WTC11 (cell line): ENCODE measurements at regions of chr17 and their contacts with region 1.

Region 1: DNA sequence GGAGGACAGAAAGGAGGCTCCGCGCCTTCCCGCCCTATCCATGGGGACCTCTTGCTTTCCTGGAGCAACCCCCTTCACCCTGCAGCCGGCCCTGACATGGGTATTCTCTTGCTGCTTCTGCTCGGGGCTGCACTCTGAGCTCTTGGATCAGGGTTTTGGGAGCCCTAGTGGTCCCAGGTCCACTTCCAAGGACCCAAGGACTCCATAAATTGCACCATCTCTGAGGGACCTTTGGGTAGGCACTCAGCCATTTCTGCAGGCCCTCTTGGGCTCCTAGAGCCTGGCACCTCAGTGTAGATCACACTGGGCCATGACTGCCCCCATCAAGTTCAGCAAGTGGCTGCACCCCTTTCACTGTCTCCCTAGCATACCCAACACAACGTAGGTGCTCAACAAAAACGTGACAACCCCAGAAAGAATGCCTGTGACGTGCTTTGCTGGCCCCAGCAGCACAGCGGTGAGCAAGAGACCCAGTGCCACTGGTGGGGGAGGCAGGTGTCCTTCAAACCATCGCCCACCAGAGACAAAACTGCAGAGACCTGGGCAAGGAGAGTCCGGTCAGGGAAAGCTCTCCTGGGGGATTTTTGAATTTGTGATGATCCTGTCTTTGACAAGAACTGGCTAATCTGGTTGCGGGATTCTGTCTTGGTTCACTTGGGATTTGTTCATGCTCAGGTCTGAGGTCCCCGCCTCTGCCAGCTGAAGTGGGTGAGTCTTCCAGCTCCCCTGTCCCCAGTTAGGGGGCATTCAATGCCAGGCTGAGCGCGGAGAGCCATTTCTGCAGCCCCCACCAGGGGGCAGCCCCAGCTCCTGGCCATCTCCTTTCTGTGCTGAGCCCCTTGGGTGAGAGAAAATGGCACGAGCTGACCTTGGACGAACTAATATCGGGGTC is 2.5 kb upstream of the RAB11FIP4 start:
- DNase-seq: peak; percentile 68
- ATAC-seq: peak; percentile 51
- H3K4me3 Mint-ChIP-seq: peak overlapping the region; percentile 76; the same call in 1 of the 2 replicates
- H3K27ac Mint-ChIP-seq: no peak overlapping the region
- H3K4me1 Mint-ChIP-seq: peaks cover 14% of the 10 kb centered on the region
- H3K27me3 Mint-ChIP-seq: peaks cover 40% of the 10 kb centered on the region
- CTCF ChIP-seq: peak; percentile 67

Region 2: DNA sequence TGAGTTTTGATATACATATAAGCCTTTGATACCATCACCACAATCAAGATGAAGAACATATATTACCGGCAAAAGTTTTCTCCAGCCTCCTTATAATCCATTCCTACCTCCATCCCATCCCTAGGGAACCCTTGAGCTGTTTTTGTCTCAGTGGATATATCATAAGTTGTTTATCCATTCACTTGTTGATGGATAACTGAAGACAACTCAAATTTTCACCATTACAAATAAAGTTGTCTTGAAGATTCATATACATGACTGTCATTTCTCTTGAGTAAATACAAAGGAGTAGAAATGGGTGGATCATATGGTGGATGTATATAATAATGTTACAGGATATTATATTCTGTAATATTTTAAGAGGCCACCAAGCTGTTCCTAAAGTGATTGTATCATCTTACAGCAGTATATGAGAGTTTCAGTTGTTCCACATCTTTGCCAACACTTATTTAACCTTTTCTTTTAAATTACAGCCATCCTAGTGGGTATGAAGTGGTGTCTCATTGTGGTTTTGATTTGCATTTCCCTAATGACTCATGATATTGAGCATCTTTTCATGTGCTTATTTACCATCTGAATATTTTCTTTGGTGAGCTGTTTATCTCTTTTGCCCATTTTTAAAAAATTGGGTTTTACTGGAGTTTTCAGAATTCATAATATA is 276.9 kb before region 1 on chr17:
- CTCF ChIA-PET with region 1: no interaction called
- POLR2A ChIA-PET with region 1: no interaction called
- DNase-seq: no peak
- ATAC-seq: no peak
- H3K4me3 Mint-ChIP-seq: no peak overlapping the region
- H3K27ac Mint-ChIP-seq: no peak overlapping the region
- H3K4me1 Mint-ChIP-seq: peaks cover 33% of the 10 kb centered on the region
- H3K27me3 Mint-ChIP-seq: no peaks in the 10 kb centered on the region
- CTCF ChIP-seq: no peak

Region 3: DNA sequence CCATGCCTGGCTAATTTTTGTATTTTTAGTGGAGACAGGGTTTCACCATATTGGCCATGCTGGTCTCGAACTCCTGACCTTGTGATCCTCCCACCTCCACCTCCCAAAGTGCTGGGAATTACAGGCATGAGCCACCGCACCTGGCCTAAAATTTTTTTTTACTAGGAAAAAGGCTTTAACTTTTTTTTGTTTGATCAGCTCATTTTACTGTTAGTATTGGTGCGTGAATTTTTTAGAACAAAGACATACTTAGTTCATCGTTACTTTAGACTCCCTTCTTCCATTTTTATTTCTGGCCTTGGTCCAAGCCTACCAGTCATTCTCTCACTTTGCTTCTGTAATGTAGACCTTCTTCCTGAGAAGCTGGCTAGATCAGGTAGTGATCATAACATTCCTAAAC is 22.9 kb before region 1 on chr17:
- CTCF ChIA-PET with region 1: interaction called, 13 read pairs
- POLR2A ChIA-PET with region 1: no interaction called
- DNase-seq: no peak
- ATAC-seq: no peak
- H3K4me3 Mint-ChIP-seq: no peak overlapping the region
- H3K27ac Mint-ChIP-seq: no peak overlapping the region
- H3K4me1 Mint-ChIP-seq: peaks cover 13% of the 10 kb centered on the region
- H3K27me3 Mint-ChIP-seq: no peaks in the 10 kb centered on the region
- CTCF ChIP-seq: no peak

Region 4: DNA sequence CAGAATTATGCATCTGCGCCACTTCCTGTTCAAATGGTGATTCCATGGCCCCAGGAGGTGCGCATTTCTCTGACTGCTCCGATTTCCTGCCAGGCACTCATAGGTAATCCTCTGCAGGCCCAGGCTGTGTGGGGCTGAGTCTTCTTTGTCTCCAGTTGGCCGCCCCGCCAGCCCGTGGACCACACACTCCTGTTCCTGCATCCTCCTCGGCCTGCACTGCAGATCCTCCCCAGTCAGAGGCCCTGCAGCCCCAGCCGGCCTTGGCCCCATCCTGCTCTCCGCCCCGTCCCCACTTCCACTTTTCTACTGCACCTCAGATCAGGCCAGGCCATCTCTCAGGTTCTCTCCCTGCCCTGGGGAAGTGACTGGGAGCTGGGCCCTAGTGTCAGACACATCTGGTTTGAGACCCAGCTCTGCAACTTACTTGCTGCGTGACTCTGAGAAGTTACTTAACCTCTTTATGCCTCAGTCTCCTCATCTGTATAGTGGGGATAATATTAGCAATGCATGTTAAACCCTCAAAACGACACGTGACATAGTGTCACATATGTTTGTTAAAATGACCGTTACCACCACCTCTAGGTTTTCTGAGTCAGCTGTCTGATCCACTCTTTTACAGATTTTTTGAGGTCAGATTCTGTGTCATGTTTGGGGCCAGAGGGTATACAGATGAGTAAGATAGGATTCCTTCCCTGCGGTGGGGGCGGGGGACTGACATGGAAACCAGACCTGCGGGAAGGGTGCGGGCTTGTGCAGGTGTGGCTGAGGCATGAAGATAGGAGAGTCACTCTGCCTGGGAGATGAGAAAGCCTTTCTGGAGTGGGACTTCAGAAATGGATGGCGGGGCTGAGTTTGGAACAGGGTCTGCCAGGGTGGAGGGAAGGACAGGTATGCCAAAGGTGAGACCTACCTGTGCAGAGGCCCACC is 15.3 kb after region 1 on chr17:
- CTCF ChIA-PET with region 1: interaction called, 21 read pairs
- POLR2A ChIA-PET with region 1: no interaction called
- DNase-seq: peak; percentile 13
- ATAC-seq: no peak
- H3K4me3 Mint-ChIP-seq: no peak overlapping the region
- H3K27ac Mint-ChIP-seq: peak overlapping the region; percentile 58; the same call in 1 of the 2 replicates
- H3K4me1 Mint-ChIP-seq: peaks cover 16% of the 10 kb centered on the region
- H3K27me3 Mint-ChIP-seq: no peaks in the 10 kb centered on the region
- CTCF ChIP-seq: no peak

Region 5: DNA sequence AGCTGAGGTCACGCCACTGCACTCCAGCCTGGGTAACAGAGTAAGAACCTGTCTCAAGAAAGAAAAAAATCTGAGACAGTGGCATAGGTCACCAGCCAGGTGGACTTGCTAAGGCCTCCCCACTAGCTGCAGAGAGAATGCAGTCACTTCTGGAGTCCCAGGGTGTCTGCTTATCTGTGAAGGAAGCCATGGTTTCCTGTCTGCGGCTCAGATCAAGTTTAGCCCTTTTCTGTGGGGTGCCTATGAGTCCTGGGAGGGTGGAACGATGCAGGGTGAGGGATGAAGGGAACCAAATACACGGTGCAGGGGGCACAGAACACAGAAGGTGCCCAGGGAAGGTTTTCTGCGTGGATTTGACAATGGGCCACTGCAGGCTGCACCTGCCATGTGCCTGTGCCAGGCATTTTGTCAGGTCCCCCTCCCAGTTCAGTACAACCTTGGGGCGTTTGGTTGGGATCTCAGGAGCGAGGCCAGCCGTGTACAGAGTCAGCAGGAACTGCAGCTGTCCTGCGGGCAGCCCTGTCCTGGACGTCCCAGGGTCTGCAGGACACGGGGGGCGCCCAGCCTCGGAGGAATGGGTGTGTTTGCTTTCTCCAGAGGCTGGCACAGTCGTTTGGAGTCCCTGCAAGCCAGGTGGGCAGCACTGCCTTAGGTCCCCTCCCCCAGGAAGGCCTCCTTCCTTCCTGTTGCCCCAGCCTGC is 44.2 kb after region 1 on chr17:
- CTCF ChIA-PET with region 1: interaction called, 15 read pairs
- POLR2A ChIA-PET with region 1: no interaction called
- DNase-seq: no peak
- ATAC-seq: no peak
- H3K4me3 Mint-ChIP-seq: no peak overlapping the region
- H3K27ac Mint-ChIP-seq: no peak overlapping the region
- H3K4me1 Mint-ChIP-seq: peaks cover 13% of the 10 kb centered on the region
- H3K27me3 Mint-ChIP-seq: no peaks in the 10 kb centered on the region; the same call in 1 of the 2 replicates
- CTCF ChIP-seq: no peak

Region 6: DNA sequence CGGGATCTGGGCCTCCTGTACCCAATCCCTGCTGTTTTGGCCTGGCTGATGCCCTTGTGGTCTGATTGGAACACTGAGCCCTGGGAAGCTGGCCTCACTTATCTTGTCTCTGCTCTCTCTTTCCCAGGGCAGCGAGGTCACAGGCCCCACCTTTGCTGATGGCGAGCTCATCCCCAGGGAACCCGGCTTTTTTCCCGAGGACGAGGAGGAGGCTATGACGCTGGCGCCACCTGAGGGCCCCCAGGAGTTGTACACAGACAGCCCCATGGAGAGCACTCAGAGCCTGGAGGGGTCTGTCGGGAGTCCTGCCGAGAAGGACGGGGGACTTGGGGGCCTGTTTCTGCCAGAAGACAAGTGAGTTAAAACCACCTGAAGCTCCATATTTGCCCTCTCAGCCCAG is 128.5 kb after region 1 on chr17:
- CTCF ChIA-PET with region 1: interaction called, 38 read pairs
- POLR2A ChIA-PET with region 1: no interaction called
- DNase-seq: peak; percentile 68
- ATAC-seq: peak; percentile 82
- H3K4me3 Mint-ChIP-seq: no peak overlapping the region
- H3K27ac Mint-ChIP-seq: 0 out of 2 replicates have a peak overlapping the region, but pooled peaks have one; percentile 45
- H3K4me1 Mint-ChIP-seq: peaks cover 11% of the 10 kb centered on the region; the same call in 1 of the 2 replicates
- H3K27me3 Mint-ChIP-seq: no peaks in the 10 kb centered on the region
- CTCF ChIP-seq: 0 out of 2 replicates have a peak, but pooled peaks have one; percentile 14

Region 7: GRCh38 chr17:31541559-31541958 is 152.5 kb after region 1 on chr17:
- CTCF ChIA-PET with region 1: interaction called, 13 read pairs
- POLR2A ChIA-PET with region 1: no interaction called
- DNase-seq: peak; percentile 32
- ATAC-seq: peak; percentile 86
- H3K4me3 Mint-ChIP-seq: no peak overlapping the region
- H3K27ac Mint-ChIP-seq: no peak overlapping the region
- H3K4me1 Mint-ChIP-seq: no peaks in the 10 kb centered on the region
- H3K27me3 Mint-ChIP-seq: no peaks in the 10 kb centered on the region
- CTCF ChIP-seq: no peak

Region 8: GRCh38 chr17:31715446-31715845 is 326.4 kb after region 1 on chr17:
- CTCF ChIA-PET with region 1: no interaction called
- POLR2A ChIA-PET with region 1: no interaction called
- DNase-seq: no peak
- ATAC-seq: no peak
- H3K4me3 Mint-ChIP-seq: no peak overlapping the region
- H3K27ac Mint-ChIP-seq: no peak overlapping the region
- H3K4me1 Mint-ChIP-seq: no peaks in the 10 kb centered on the region
- H3K27me3 Mint-ChIP-seq: no peaks in the 10 kb centered on the region
- CTCF ChIP-seq: no peak